CD4-positive, alpha-beta memory T cell (primary cell): ENCODE measurements at regions of chr4 and their contacts with region 1.

Region 1: GRCh38 chr4:1721004-1721665 is at the starts of genes TACC3 and TMEM129:
- DNase-seq: peak; percentile 95 to 98 (median 97)
- H3K4me3 ChIP-seq: peak within 1 kb of the TSS; percentile 52 to 69
- H3K4me3 Mint-ChIP-seq: peak within 1 kb of the TSS; percentile 87 to 94 (median 90)
- H3K27ac ChIP-seq: peak within 1 kb of the TSS; percentile 69
- H3K27ac Mint-ChIP-seq: peak within 1 kb of the TSS; percentile 95 to 99 (median 98)
- H3K4me1 ChIP-seq: peaks cover 62% of the 10 kb centered on the region
- H3K4me1 Mint-ChIP-seq: peaks cover 32 to 62% (median 47%) of the 10 kb centered on the region in 4 donors
- H3K27me3 ChIP-seq: no peaks in the 10 kb centered on the region
- H3K27me3 Mint-ChIP-seq: no peaks in the 10 kb centered on the region
- total RNA-seq, gene TACC3: 134 to 136 TPM
- total RNA-seq, gene TMEM129: 40.6 to 42.1 TPM

Region 2: DNA sequence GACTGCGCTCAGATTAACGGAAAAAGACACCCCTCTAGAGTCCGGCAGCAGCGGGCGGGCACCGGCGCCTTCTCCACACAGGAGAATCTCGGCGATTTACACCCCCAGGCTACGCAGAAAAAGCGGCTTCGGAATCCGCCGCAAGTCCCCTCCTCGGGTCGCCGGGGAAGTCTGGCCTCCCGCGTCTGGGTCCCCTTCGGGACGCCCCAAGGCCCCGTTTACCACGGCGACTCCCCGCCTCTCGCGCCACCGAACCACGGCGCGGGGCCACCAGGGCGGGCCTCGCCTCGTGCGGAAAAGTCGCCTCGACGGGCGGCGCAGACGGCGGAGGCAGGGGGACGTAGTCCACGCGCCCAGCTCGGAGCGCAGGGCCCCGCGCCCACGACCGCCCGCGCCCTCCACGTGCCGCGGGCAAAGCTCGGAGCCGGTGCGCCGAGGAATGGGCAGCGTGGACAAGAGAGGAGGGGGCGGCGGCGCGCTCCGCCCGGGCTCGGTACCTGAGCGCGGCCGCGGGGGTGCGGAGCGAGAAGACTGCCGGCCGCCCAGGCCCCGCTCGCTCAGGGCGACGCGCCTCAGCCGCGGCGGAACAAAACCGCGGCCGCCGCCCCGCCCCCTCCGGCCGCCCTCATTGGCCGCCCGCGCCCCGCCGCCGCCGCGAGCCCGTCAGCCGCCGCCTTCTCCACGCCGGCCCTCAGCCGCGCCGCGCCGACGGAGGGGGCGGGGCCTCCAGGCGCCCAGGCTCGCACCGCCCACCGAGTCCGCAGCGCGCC is 37.2 kb before region 1 on chr4 and contains the start of gene FAM53A:
- CTCF ChIA-PET with region 1: interaction called, 591 read pairs
- POLR2A ChIA-PET with region 1: interaction called, 7 read pairs
- intact Hi-C with region 1: loop called (anchors 1 kb)
- DNase-seq: peak; percentile 57 to 92 (median 90)
- H3K4me3 ChIP-seq: peak within 1 kb of the TSS; percentile 52 to 58
- H3K4me3 Mint-ChIP-seq: peak within 1 kb of the TSS; percentile 88 to 93 (median 91)
- H3K27ac ChIP-seq: peak within 1 kb of the TSS; percentile 52
- H3K27ac Mint-ChIP-seq: peak within 1 kb of the TSS; percentile 89 to 96 (median 95)
- H3K4me1 ChIP-seq: peaks cover 7% of the 10 kb centered on the region
- H3K4me1 Mint-ChIP-seq: peaks cover 9 to 16% (median 11%) of the 10 kb centered on the region in 4 donors
- H3K27me3 ChIP-seq: no peaks in the 10 kb centered on the region
- H3K27me3 Mint-ChIP-seq: no peaks in the 10 kb centered on the region
- total RNA-seq, gene FAM53A: 0.89 to 2.2 TPM

Region 3: DNA sequence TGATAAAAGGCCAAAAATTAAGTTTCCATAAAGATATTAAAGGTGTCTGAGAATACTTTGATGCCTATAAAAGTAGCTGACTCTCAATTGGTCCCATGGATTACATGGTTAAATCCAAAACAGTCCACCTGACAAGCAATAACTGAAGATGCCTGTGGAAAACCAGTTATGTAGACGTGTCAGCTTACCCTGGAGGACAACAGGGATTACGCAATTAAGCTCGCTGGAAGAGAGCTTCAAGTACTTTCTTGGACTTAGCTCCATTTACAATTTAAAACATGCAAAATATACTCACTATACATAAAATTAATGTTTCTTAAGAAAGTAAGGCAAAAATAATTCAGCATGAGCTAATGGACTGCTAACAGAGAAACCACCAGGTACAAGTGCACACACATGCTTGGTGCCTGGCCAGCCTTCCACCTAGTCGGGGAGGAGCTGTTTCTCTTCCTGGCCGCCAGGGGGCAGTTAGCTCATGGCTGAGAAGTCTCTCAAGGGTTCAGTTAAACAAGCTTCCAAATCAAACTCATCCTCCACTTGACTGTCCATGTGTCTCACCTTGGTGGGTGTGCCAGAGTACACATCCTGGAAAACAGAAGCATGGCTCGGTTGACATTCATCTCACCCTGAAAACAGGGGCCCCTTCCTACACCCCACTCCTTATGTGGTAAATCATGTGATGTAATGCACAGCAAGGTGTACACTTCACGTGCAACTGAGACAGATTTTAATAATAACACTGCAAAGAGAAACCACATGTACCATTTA is 27.8 kb before region 1 on chr4:
- CTCF ChIA-PET with region 1: interaction called, 591 read pairs
- POLR2A ChIA-PET with region 1: interaction called, 128 read pairs
- intact Hi-C with region 1: loop called (anchors 1 kb)
- DNase-seq: peak; percentile 77 to 81 (median 81)
- H3K4me3 ChIP-seq: no peak overlapping the region
- H3K4me3 Mint-ChIP-seq: no peak overlapping the region
- H3K27ac ChIP-seq: no peak overlapping the region
- H3K27ac Mint-ChIP-seq: peak overlapping the region in 6 of 7 donors; percentile 26 to 90 (median 62)
- H3K4me1 ChIP-seq: peaks cover 4% of the 10 kb centered on the region
- H3K4me1 Mint-ChIP-seq: peaks cover 3 to 5% (median 4%) of the 10 kb centered on the region in 4 donors
- H3K27me3 ChIP-seq: no peaks in the 10 kb centered on the region
- H3K27me3 Mint-ChIP-seq: no peaks in the 10 kb centered on the region

Region 4: GRCh38 chr4:1706358-1706757 is 14.8 kb before region 1 on chr4:
- CTCF ChIA-PET with region 1: interaction called, 13 read pairs
- POLR2A ChIA-PET with region 1: interaction called, 196 read pairs
- intact Hi-C with region 1: no loop called
- DNase-seq: no peak
- H3K4me3 ChIP-seq: no peak overlapping the region
- H3K4me3 Mint-ChIP-seq: peak overlapping the region in 1 of 8 donors; percentile 55
- H3K27ac ChIP-seq: no peak overlapping the region
- H3K27ac Mint-ChIP-seq: peak overlapping the region in 1 of 7 donors; percentile 61
- H3K4me1 ChIP-seq: peaks cover 30% of the 10 kb centered on the region
- H3K4me1 Mint-ChIP-seq: peaks cover 28 to 80% (median 50%) of the 10 kb centered on the region in 4 donors
- H3K27me3 ChIP-seq: no peaks in the 10 kb centered on the region
- H3K27me3 Mint-ChIP-seq: no peaks in the 10 kb centered on the region

Region 5: DNA sequence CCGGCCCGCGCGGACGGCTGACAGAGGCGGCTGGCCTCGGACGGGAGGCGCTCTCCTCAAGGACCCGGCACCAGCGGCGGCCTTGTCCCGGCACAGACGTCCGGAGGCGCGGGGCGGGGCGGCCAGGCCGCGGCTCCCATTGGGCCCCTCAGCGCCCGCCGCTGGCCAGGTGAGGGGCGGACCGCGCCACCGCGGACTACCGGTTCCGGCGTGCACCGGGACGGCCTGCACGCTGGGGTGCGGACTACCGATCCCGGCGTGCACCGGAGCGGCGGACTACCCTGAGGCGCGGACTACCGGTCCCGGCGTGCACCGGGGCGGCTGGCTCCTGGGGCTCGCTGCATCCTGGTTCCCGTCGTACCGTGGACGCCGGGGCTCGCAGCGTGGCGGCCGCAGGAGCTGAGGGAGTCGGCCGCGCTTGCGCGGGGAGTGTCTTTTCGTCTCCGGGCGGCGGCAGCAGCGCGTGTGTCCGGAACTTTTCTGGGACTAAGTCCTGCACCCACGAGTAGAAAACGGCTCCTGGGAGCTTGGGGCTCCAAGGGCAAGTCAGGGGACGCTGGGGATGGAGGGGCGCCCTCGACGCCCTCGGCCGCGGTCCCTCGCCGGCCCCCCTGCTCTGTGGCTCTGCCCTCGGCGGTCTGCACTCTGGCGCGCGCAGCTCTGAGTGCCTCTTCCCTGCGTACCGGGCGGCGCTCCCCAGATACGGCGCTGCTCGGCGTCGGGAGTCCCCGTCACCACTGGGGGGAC is 135.1 kb after region 1 on chr4 and contains the start of gene LETM1:
- CTCF ChIA-PET with region 1: no interaction called
- POLR2A ChIA-PET with region 1: interaction called, 12 read pairs
- intact Hi-C with region 1: no loop called
- DNase-seq: peak; percentile 90 to 92 (median 91)
- H3K4me3 ChIP-seq: peak within 1 kb of the TSS; percentile 47 to 89
- H3K4me3 Mint-ChIP-seq: peak within 1 kb of the TSS; percentile 81 to 90 (median 85)
- H3K27ac ChIP-seq: peak within 1 kb of the TSS; percentile 59
- H3K27ac Mint-ChIP-seq: peak within 1 kb of the TSS; percentile 25 to 84 (median 76)
- H3K4me1 ChIP-seq: peaks cover 44% of the 10 kb centered on the region
- H3K4me1 Mint-ChIP-seq: peaks cover 9 to 42% (median 31%) of the 10 kb centered on the region in 4 donors
- H3K27me3 ChIP-seq: no peaks in the 10 kb centered on the region
- H3K27me3 Mint-ChIP-seq: no peaks in the 10 kb centered on the region
- total RNA-seq, gene LETM1: 38.8 to 42.8 TPM

Region 6: DNA sequence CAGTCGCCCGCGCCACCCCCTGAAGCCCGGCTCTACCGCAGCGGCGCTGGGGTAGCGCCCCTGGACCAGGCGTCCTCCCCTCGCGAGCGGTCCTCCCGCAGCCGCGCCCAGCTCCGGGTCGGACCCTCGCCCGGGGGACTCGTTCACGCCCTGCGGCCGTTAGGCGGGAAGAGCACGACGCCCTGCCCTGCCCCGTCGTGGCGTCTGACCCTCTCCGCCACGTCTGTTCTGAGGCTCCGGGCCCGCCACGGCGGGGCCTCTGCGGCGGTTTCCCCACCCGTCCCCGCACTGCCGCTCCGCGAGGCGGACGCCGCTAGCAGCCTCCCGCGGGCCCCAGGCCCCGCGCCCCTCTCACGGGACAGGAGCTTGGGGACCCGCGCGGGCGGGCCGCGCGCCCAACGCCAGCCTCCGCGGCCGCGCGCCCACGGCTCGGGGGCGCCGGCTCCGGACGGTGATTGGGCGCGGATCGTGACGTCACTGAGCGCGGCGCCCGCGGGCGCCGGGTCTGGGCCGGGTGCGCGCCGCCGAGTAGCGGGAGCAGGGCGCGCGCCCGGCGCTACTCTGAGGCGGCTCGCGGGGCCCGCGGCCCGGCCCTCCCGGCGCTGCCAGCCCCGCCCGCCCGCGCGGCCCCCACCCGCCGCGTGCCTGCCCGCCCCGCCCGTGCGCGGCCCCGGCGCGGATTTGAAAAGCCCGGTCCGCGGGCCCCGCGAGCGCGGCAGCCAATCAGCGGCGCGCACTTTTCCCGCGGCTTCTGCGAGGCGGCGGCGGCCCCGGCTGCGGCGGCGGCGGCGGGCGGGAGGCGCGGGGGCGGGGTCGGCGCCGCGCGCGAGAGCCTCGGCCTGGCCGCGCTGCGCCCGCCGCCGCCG is 149.7 kb after region 1 on chr4 and contains the start of gene NSD2:
- CTCF ChIA-PET with region 1: no interaction called
- POLR2A ChIA-PET with region 1: interaction called, 6 read pairs
- intact Hi-C with region 1: loop called (anchors 2 kb)
- DNase-seq: peak; percentile 84 to 89 (median 88)
- H3K4me3 ChIP-seq: peak within 1 kb of the TSS; percentile 47 to 84
- H3K4me3 Mint-ChIP-seq: peak within 1 kb of the TSS; percentile 86 to 97 (median 89)
- H3K27ac ChIP-seq: peak within 1 kb of the TSS; percentile 91
- H3K27ac Mint-ChIP-seq: peak within 1 kb of the TSS; percentile 95 to 99 (median 98)
- H3K4me1 ChIP-seq: peaks cover 36% of the 10 kb centered on the region
- H3K4me1 Mint-ChIP-seq: peaks cover 21 to 39% (median 32%) of the 10 kb centered on the region in 4 donors
- H3K27me3 ChIP-seq: no peaks in the 10 kb centered on the region
- H3K27me3 Mint-ChIP-seq: peaks cover 0 to 3% of the 10 kb centered on the region in 2 donors
- total RNA-seq, gene NSD2: 54.8 to 57.4 TPM

Region 7: DNA sequence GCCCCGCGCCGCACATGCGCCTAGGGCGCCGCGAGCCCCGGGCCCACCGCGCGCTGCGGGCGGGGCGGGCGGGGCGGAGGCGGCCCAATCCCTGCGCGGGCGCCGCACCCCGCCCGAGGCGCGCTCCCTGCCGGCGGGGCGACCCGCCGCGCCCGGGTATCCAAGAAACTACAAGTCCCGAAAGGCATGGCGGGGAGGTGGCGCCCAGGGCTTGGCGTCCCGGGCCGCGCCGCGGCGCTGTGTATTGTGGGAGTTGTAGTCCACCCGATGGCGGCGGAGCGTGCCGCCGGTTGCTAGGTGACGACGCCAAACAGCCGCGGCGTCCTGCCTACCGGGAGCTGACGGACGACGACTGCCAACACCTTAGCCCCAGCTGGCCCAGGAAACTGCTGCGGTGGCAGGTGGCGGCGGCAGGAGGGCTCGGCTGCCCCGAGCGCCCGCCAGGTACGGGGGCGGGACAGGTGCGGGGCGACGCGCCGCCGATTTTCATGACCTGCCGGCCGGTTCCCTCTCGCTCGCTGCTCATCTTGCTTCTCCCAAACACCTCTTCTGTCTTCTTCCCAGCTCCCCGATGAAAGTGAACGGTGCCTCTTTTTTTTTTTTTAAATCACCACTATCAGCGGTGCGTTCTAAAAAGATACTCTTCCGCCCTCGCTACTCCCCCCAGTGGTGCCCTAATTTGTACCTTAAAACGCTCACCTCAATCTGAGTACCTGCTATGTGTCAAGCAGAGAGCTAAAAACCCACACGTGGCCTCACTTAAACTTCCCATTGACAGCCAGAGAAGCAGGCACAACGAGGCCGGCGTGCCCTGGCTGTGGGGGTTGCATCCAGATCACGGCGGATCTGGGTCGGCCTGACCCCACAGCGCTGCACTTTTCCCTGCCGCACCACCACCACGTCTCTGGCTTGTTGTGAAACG is 697.8 kb after region 1 on chr4 and contains the start of gene CFAP99:
- CTCF ChIA-PET with region 1: no interaction called
- POLR2A ChIA-PET with region 1: interaction called, 3 read pairs
- intact Hi-C with region 1: loop called (anchors 10 kb)
- DNase-seq: peak; percentile 96 to 99 (median 97)
- H3K4me3 ChIP-seq: peak within 1 kb of the TSS; percentile 44 to 72
- H3K4me3 Mint-ChIP-seq: peak within 1 kb of the TSS; percentile 89 to 95 (median 92)
- H3K27ac ChIP-seq: peak within 1 kb of the TSS; percentile 78
- H3K27ac Mint-ChIP-seq: peak within 1 kb of the TSS; percentile 92 to 100 (median 98)
- H3K4me1 ChIP-seq: peaks cover 39% of the 10 kb centered on the region
- H3K4me1 Mint-ChIP-seq: peaks cover 29 to 48% (median 36%) of the 10 kb centered on the region in 4 donors
- H3K27me3 ChIP-seq: no peaks in the 10 kb centered on the region
- H3K27me3 Mint-ChIP-seq: no peaks in the 10 kb centered on the region
- total RNA-seq, gene CFAP99: 0.12 to 0.19 TPM